ENCODE measurements at regions of chr19 and their contacts with region 1.

Region 1: DNA sequence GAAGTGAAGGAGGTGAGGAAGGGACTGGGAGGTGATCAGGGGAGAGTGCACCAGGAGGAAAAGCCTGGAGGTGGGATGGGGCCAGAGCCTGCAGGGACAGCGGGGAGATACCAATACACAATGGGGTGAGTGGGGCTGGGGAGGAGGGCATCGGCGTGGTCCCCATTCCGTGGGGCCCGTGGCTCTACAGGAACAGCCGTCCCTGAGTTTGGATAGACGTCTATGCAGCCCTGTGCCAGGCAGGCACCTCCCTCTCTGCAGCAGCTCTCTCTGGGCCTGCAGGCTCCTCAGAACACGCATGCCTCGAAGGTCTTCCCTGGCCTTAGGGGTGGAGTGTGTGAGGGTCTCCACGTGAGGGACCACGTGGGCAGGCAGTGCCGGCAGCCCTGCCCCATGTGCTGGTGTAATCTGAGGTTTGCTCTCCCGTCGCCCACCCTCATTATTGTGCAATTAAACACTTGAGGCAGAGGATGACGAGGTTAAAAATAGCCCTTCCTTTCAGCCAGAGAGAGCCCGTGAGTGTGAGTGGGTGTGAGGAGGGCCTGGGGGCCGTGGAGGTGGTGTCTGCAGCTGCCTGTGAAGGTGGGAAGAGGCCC is 16.5 kb downstream of the C2CD4C start:
- DNase-seq: no peak

Region 2: GRCh38 chr19:480016-480855 is 87.8 kb after region 1 on chr19:
- intact Hi-C with region 1: loop called (anchors 5 kb)
- DNase-seq: peak; percentile 85